A673 (cell line): ENCODE measurements at regions of chr9 and their contacts with region 1.

Region 1: GRCh38 chr9:137498716-137499195 is 39.6 kb upstream of the NSMF start:
- DNase-seq: no peak
- H3K4me3 ChIP-seq: no peak overlapping the region
- H3K27ac ChIP-seq: no peak overlapping the region
- H3K4me1 ChIP-seq: no peaks in the 10 kb centered on the region
- H3K27me3 ChIP-seq: no peaks in the 10 kb centered on the region
- CTCF ChIP-seq: no peak

Region 2: DNA sequence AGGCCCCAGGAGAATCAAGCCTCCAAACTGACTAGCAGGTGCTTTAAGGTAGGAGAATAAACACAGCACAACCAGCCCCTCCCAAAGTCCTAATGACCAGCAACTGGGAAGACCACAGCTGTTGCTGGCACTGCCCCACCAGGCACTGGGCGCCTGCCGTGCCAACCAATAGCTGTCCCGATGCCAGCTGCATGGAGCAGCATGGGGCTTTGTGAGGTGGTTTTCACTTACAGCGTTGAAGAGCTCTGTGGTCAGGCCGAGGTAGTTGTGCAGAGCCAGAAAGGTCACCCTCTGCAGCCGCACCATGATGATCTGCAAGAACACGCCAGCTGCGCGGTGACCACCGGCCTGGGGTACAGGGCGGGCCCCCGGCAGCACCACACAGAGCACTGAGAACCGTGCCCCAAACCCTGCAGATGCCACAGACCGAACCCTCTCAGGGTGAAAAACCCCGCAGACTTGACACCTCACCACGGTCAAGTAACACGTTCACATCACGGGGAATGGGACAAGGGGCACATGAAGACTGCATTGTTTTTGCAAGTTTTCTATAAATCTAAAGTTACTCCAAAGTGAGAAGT is 22.7 kb after region 1 on chr9:
- CTCF ChIA-PET with region 1: no interaction called
- POLR2A ChIA-PET with region 1: interaction called, 13 read pairs
- intact Hi-C with region 1: no loop called
- DNase-seq: no peak
- H3K4me3 ChIP-seq: no peak overlapping the region
- H3K27ac ChIP-seq: no peak overlapping the region
- H3K4me1 ChIP-seq: no peaks in the 10 kb centered on the region
- H3K27me3 ChIP-seq: no peaks in the 10 kb centered on the region
- CTCF ChIP-seq: no peak